ENCODE measurements at regions of chr20 and their contacts with region 1.

Region 1: DNA sequence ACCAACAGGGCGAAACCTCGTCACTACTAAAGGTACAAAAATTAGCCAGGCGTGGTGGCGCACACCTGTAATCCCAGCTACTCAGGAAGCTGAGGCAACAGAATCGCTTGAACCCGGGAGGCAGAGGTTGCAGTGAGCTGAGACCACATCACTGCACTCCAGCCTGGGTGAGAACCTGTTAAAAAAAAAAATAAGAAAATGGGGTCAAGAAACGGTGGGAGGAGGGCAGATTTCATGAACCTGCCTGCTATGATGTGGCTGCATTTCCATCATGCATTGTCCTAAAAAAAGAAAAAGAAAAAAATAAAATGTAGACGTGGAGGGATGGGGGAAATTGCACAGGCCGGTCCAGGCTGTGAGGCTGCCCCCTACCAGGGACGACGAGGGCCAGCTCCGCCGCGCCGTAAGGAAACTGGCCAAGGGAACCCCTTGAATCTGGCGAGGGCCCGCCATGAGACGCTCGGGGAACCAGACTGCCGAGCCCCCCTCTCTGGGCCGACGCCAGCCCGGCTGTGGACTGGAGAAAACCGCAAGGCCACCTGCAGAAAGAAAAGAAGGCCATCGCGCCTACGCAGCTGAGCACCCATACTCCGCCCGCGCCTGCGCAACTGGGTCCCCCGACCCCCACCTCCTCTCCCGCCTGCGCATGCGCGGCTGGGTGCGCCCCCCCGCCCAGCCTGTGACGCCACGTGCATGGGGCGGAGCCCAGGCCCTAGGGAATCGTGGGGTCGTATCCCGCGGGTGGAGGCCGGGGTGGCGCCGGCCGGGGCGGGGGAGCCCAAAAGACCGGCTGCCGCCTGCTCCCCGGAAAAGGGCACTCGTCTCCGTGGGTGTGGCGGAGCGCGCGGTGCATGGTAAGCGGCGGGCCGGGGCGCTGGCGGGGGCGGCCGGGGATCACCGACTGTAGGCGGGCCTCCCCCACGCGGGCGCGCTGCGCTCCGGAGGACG is at the start of gene ENTPD6:
- DNase-seq: peak; percentile 81
- ATAC-seq: peak; percentile 93
- H3K4me3 ChIP-seq: peak within 1 kb of the TSS; percentile 90
- H3K27ac ChIP-seq: peak within 1 kb of the TSS; percentile 66
- H3K4me1 ChIP-seq: peaks cover 7% of the 10 kb centered on the region
- H3K27me3 ChIP-seq: peaks cover 10% of the 10 kb centered on the region; the same call in 1 of the 2 replicates
- CTCF ChIP-seq: 0 out of 2 replicates have a peak, but pooled peaks have one; percentile 23
- POLR2A ChIP-seq: peak; percentile 69
- RAD21 ChIP-seq: peak; percentile 20
- total RNA-seq, gene ENTPD6: 53.6 and 61.1 TPM in 2 replicates

Region 2: GRCh38 chr20:25233016-25233820 is 37.9 kb after region 1 on chr20:
- CTCF ChIA-PET with region 1: no interaction called
- POLR2A ChIA-PET with region 1: no interaction called
- dilution Hi-C with region 1: no loop called
- in situ Hi-C with region 1: loop called (anchors 5 kb)
- intact Hi-C with region 1: no loop called
- DNase-seq: peak; percentile 65
- ATAC-seq: peak; percentile 12; the same call in 1 of the 2 replicates
- H3K4me3 ChIP-seq: no peak overlapping the region
- H3K27ac ChIP-seq: no peak overlapping the region
- H3K4me1 ChIP-seq: peaks cover 14% of the 10 kb centered on the region
- H3K27me3 ChIP-seq: no peaks in the 10 kb centered on the region
- CTCF ChIP-seq: no peak
- POLR2A ChIP-seq: no peak
- RAD21 ChIP-seq: no peak

Region 3: GRCh38 chr20:25247956-25248785 is 52.9 kb after region 1 on chr20 and contains the start of gene PYGB:
- CTCF ChIA-PET with region 1: interaction called, 4 read pairs
- POLR2A ChIA-PET with region 1: no interaction called
- dilution Hi-C with region 1: no loop called
- in situ Hi-C with region 1: loop called (anchors 10 kb)
- intact Hi-C with region 1: loop called (anchors 2 kb)
- DNase-seq: peak; percentile 78
- ATAC-seq: peak; percentile 87
- H3K4me3 ChIP-seq: peak within 1 kb of the TSS; percentile 81
- H3K27ac ChIP-seq: peak within 1 kb of the TSS; percentile 98
- H3K4me1 ChIP-seq: peaks cover 13% of the 10 kb centered on the region
- H3K27me3 ChIP-seq: no peaks in the 10 kb centered on the region
- CTCF ChIP-seq: no peak
- POLR2A ChIP-seq: peak; percentile 93
- RAD21 ChIP-seq: no peak; the same call in 1 of the 2 replicates
- total RNA-seq, gene PYGB: 72.4 and 81.4 TPM in 2 replicates

Region 4: DNA sequence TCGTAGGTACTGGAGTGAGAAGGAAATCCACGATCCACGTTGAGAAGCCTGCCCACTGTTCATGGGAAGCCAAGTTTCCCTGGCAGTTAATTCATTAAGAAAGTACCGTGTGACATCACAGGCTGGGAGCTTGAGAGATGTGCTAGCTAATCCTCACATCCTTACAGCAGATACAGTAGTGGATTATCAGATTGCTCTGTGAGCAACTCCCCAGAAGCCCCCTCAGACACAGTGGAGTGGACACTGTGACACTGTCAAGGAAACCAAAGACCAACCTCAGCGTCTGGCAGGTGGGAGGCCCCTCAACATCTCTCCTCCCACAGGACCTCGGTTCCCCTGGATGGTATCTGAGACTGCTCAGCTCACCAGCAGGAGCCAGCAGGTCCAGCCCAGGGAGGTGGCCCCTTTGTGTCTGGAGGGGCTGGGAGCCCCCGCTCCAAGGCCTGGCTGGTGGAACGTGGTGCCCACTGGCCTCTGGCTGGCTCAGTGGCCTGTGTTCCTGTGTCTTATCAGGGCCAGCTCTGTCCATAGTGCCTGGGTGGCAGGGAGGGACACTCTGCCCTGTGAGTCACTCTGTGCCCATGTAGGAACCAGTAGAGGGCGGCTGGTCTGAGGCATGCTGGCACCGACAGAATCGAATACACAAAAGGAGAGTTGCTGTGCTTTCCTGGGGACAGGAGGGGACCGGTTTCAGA is 59.8 kb after region 1 on chr20:
- CTCF ChIA-PET with region 1: no interaction called
- POLR2A ChIA-PET with region 1: no interaction called
- dilution Hi-C with region 1: no loop called
- in situ Hi-C with region 1: loop called (anchors 10 kb)
- intact Hi-C with region 1: no loop called
- DNase-seq: no peak
- ATAC-seq: no peak; the same call in 1 of the 2 replicates
- H3K4me3 ChIP-seq: no peak overlapping the region
- H3K27ac ChIP-seq: no peak overlapping the region
- H3K4me1 ChIP-seq: peaks cover 10% of the 10 kb centered on the region
- H3K27me3 ChIP-seq: no peaks in the 10 kb centered on the region
- CTCF ChIP-seq: no peak
- POLR2A ChIP-seq: no peak
- RAD21 ChIP-seq: no peak

Region 5: DNA sequence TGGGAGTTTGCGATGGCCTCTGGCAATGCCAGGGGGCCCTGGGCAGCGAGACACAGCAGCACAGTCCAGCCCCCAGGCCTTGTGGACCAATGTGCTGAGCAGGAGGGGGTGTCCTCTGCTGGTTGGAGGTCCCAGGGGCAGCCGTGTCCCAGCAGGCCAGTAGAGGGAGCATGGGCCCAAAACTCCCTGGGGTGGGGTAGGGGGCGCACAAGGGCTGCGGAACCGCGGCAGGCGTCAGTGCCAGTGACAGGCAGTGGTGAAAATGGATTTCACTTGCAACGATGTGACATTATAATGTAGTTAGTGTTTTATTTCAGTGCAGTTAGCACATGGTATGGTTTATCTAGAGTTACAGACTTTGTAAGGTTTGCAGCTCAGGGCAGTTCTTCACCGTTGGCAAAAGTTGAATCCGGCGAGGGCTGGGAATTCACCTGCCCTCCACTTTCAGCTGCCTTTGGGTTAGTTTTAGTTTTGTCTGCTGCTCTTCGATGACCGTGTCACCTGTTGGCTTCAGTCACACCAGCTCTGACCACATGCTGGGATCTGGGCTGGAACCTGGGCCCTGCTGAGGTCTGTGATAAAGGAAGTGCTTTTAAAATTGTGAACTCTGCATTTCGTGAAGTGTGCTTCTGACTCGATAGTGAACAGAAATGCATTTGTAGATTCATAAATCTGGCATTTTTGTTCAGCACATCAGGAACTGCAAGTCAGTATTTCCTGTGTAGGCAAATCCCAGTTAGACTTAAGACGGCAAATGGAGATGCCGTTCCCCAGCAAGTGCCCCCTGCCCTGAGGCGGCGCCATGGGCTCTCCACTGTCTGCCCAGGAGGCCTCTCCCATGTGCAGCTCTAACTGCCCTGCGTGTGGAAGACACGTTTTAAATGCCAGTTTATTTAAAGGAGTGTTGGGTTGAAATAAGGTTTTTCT is 99.4 kb after region 1 on chr20:
- CTCF ChIA-PET with region 1: no interaction called
- POLR2A ChIA-PET with region 1: no interaction called
- dilution Hi-C with region 1: no loop called
- in situ Hi-C with region 1: loop called (anchors 10 kb)
- intact Hi-C with region 1: no loop called
- DNase-seq: peak; percentile 52
- ATAC-seq: peak; percentile 81
- H3K4me3 ChIP-seq: no peak overlapping the region
- H3K27ac ChIP-seq: no peak overlapping the region
- H3K4me1 ChIP-seq: peaks cover 7% of the 10 kb centered on the region
- H3K27me3 ChIP-seq: no peaks in the 10 kb centered on the region
- CTCF ChIP-seq: peak; percentile 99
- POLR2A ChIP-seq: no peak
- RAD21 ChIP-seq: peak; percentile 85

Region 6: GRCh38 chr20:25418776-25419175 is 223.5 kb after region 1 on chr20:
- CTCF ChIA-PET with region 1: no interaction called
- POLR2A ChIA-PET with region 1: no interaction called
- dilution Hi-C with region 1: no loop called
- in situ Hi-C with region 1: loop called (anchors 10 kb)
- intact Hi-C with region 1: no loop called
- DNase-seq: peak; percentile 69
- ATAC-seq: peak; percentile 24; the same call in 1 of the 2 replicates
- H3K4me3 ChIP-seq: no peak overlapping the region
- H3K27ac ChIP-seq: no peak overlapping the region
- H3K4me1 ChIP-seq: 0 out of 2 replicates have a peak, but pooled peaks cover 2% of the 10 kb centered on the region
- H3K27me3 ChIP-seq: no peaks in the 10 kb centered on the region
- CTCF ChIP-seq: no peak
- POLR2A ChIP-seq: no peak
- RAD21 ChIP-seq: no peak